AG04449 (cell line): ENCODE measurements at regions of chr1 and their contacts with region 1.

Region 1: DNA sequence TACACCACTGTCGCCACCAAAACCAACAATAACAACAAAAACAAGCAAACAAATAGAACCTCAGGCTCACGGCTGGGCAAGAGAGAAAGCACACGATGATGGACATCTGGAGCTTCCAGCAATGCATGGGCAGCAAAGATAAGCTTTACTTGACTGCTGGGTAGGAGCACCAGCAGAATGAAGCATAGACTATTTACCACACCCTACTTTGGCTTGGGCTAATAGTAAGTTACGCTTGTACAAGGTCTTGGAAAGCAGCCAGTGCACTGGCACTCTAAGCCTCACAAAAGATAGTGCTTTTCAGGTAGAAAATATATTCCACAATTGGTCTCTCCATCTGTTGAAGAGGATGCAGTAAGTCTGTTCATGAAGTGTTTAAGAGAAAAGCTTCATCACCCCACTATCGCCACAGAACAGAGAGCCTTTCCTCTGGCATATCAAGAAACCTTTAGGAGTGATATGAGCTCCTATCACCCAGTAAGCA is 13.6 kb downstream of the ADIPOR1 start:
- DNase-seq: no peak
- H3K4me3 ChIP-seq: no peak overlapping the region
- CTCF ChIP-seq: no peak

Region 2: DNA sequence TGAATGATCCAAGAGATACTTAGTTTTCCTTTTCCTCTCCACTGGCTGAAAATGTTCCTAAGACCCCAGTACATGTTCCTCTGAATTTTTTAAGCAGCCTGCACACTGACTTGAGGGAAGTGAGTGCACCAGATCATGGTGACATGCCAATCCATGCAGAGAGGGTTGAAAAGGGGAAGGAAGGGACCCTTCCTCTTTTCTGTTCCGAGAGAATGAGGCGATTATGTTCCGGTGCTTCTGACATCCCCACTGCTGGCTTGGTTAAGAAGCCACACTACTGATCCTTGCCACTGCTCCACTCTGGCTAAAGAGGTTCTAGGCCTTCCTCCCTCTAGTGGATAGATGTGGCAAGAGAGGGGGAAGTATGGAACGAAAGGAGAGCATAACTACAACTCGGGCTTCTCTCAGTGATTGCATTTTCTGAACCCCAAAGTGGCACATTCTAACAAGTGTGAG is 24.4 kb after region 1 on chr1:
- CTCF ChIA-PET with region 1: interaction called, 12 read pairs
- POLR2A ChIA-PET with region 1: no interaction called
- DNase-seq: no peak
- H3K4me3 ChIP-seq: no peak overlapping the region
- CTCF ChIP-seq: peak; percentile 71